ENCODE measurements at regions of chr4 and their contacts with region 1.

Region 1: GRCh38 chr4:183471946-183472708 is 27.7 kb downstream of the CDKN2AIP start:
- DNase-seq: peak; percentile 81 to 92 (median 83)
- ATAC-seq: peak; percentile 78 to 94 (median 86)
- H3K4me3 ChIP-seq: peak overlapping the region in 7 of 12 donors; percentile 6 to 32 (median 24)
- H3K27ac ChIP-seq: peak overlapping the region in 3 of 12 donors; percentile 4 to 76 (median 31)
- H3K4me1 ChIP-seq: peaks cover 0 to 26% (median 5%) of the 10 kb centered on the region in 12 donors
- H3K27me3 ChIP-seq: no peaks in the 10 kb centered on the region
- CTCF ChIP-seq: peak; percentile 82 to 97 (median 91)
- POLR2A ChIP-seq: no peak

Region 2: DNA sequence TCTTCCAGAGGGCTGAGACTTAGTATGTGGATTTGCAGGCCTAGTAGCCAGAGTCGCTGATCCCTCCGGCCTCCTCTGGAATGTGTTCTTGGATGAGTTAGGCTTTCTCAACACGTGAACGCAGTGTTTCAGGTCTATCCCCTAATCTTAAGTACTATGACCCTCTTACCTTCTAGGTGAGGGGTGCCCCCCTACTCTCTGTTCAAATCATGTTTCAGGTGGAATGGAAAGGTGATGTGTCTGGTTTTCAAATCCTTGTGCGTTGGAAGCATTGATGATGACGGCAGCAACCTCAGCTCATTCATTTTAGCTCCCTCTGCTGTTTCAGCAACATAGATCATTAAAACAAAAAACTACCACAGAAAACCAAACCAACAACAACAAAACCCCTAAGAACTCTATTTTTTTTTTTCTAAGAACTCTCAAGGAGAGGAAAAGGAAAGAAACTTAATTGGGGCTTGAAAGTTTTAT is 130.5 kb after region 1 on chr4:
- intact Hi-C with region 1: loop called (anchors 2 to 10 kb)
- DNase-seq: no peak
- ATAC-seq: peak in 1 of 4 donors; percentile 47
- H3K4me3 ChIP-seq: no peak overlapping the region
- H3K27ac ChIP-seq: no peak overlapping the region
- H3K4me1 ChIP-seq: no peaks in the 10 kb centered on the region
- H3K27me3 ChIP-seq: no peaks in the 10 kb centered on the region
- CTCF ChIP-seq: peak in 9 of 12 donors; percentile 14 to 48 (median 27)
- POLR2A ChIP-seq: no peak

Region 3: DNA sequence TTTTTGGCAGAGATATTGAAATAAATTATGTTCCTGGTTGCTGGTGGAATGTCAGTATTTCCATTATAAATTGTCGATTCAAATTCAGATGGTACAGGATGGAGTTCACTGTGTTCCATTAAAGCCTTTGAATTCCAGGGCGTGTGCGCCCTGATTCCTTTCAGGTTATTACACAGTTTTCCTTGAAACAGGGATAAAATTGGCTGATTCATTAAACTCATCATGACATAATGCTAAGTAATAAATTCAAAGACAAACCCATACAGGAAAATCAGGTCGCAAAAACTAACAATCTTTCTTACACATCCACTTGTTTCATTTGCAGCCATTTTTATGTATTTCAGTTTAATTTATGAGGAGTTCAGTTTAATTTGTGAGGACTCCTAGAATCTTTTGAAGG is 135.8 kb after region 1 on chr4:
- intact Hi-C with region 1: loop called in 8 of 10 experiments (anchors 2 to 10 kb)
- DNase-seq: no peak
- ATAC-seq: no peak
- H3K4me3 ChIP-seq: no peak overlapping the region
- H3K27ac ChIP-seq: no peak overlapping the region
- H3K4me1 ChIP-seq: peaks cover 0 to 5% (median 0%) of the 10 kb centered on the region in 12 donors
- H3K27me3 ChIP-seq: no peaks in the 10 kb centered on the region
- CTCF ChIP-seq: no peak
- POLR2A ChIP-seq: no peak

Region 4: GRCh38 chr4:183659029-183659871 is 187.1 kb after region 1 on chr4 and contains the starts of genes RWDD4 and TRAPPC11:
- intact Hi-C with region 1: loop called in 5 of 10 experiments (anchors 2 to 10 kb)
- DNase-seq: peak; percentile 98 to 99 (median 99)
- ATAC-seq: peak; percentile 100
- H3K4me3 ChIP-seq: peak within 1 kb of the TSS; percentile 51 to 95 (median 85)
- H3K27ac ChIP-seq: peak within 1 kb of the TSS; percentile 27 to 93 (median 88)
- H3K4me1 ChIP-seq: peaks cover 3 to 34% (median 21%) of the 10 kb centered on the region in 12 donors
- H3K27me3 ChIP-seq: no peaks in the 10 kb centered on the region
- CTCF ChIP-seq: peak in 6 of 12 donors; percentile 11 to 41 (median 24)
- POLR2A ChIP-seq: peak; percentile 80 to 98
- total RNA-seq, gene RWDD4: 13.2 to 20.4 (median 15.8) TPM
- total RNA-seq, gene TRAPPC11: 16.3 to 28.5 (median 22.0) TPM

Region 5: GRCh38 chr4:184168406-184169019 is 696.4 kb after region 1 on chr4:
- intact Hi-C with region 1: loop called in 6 of 10 experiments (anchors 5 to 10 kb)
- DNase-seq: peak; percentile 72 to 90 (median 79)
- ATAC-seq: peak; percentile 73 to 96 (median 96)
- H3K4me3 ChIP-seq: peak overlapping the region in 4 of 12 donors; percentile 1 to 38 (median 18)
- H3K27ac ChIP-seq: no peak overlapping the region
- H3K4me1 ChIP-seq: peaks cover 0 to 7% (median 1%) of the 10 kb centered on the region in 12 donors
- H3K27me3 ChIP-seq: peaks cover 0 to 27% (median 0%) of the 10 kb centered on the region in 9 donors
- CTCF ChIP-seq: peak; percentile 88 to 99 (median 96)
- POLR2A ChIP-seq: no peak